HepG2 (cell line): ENCODE measurements at regions of chr1 and their contacts with region 1.

Region 1: GRCh38 chr1:235513495-235514366 is 9.5 kb upstream of the B3GALNT2 start:
- DNase-seq: peak; percentile 69
- ATAC-seq: peak; percentile 72; the same call in 2 of the 3 replicates
- H3K4me3 ChIP-seq: no peak overlapping the region
- H3K27ac ChIP-seq: no peak overlapping the region
- H3K4me1 ChIP-seq: no peaks in the 10 kb centered on the region; the same call in 1 of the 2 replicates
- H3K27me3 ChIP-seq: no peaks in the 10 kb centered on the region
- CTCF ChIP-seq: peak; percentile 80
- EP300 ChIP-seq: no peak
- POLR2A ChIP-seq: no peak
- RAD21 ChIP-seq: peak; percentile 46

Region 2: DNA sequence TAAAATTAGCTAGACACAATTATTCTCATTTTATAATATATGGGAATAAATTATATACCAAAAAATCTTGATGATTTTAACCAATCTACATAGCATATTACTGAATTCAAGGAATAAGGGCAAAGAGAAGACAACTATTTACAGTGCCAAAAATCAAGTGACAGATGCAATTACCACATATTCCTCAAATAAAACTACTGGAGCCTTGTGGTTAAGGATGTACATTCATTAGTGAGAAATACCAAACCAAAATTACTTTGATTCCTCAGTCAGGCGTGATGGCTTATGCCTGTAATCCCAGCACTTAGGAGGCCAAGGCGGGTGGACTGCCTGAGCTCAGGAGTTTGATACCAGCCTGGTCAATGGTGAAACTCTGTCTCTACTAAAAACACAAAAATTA is 283.9 kb before region 1 on chr1:
- CTCF ChIA-PET with region 1: no interaction called
- POLR2A ChIA-PET with region 1: no interaction called
- in situ Hi-C with region 1: no loop called
- intact Hi-C with region 1: no loop called
- DNase-seq: no peak
- ATAC-seq: no peak
- H3K4me3 ChIP-seq: no peak overlapping the region
- H3K27ac ChIP-seq: no peak overlapping the region
- H3K4me1 ChIP-seq: no peaks in the 10 kb centered on the region
- H3K27me3 ChIP-seq: no peaks in the 10 kb centered on the region; a peak in 1 of 5 replicates
- CTCF ChIP-seq: no peak
- EP300 ChIP-seq: no peak
- POLR2A ChIP-seq: no peak
- RAD21 ChIP-seq: no peak

Region 3: GRCh38 chr1:235532360-235532759 is 18.6 kb after region 1 on chr1:
- CTCF ChIA-PET with region 1: no interaction called
- POLR2A ChIA-PET with region 1: no interaction called
- in situ Hi-C with region 1: no loop called
- intact Hi-C with region 1: no loop called
- DNase-seq: no peak
- ATAC-seq: no peak
- H3K4me3 ChIP-seq: no peak overlapping the region
- H3K27ac ChIP-seq: no peak overlapping the region
- H3K4me1 ChIP-seq: no peaks in the 10 kb centered on the region
- H3K27me3 ChIP-seq: no peaks in the 10 kb centered on the region
- CTCF ChIP-seq: no peak
- EP300 ChIP-seq: no peak
- POLR2A ChIP-seq: no peak
- RAD21 ChIP-seq: no peak

Region 4: DNA sequence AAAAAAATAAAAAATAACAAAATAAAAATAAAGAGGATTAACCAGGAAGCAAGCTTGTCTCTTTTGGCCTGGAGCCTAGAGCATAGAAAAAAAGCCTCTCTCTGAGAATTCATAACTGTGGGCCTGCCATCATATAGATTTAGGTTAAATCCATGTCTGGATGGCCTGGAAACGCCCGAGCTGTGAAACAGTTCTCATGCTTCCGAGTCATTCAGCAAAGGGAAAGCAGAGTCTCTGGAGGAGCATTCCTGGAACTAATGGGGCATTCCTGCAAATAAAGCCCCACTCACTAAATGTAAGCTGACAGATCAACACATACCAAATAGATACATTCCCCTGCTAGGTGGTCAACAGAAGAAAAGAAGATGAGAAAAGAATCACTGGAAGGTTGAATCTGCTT is 211.7 kb after region 1 on chr1:
- CTCF ChIA-PET with region 1: interaction called, 19 read pairs
- POLR2A ChIA-PET with region 1: no interaction called
- in situ Hi-C with region 1: loop called (anchors 10 kb)
- intact Hi-C with region 1: loop called (anchors 2 kb)
- DNase-seq: no peak
- ATAC-seq: no peak
- H3K4me3 ChIP-seq: no peak overlapping the region
- H3K27ac ChIP-seq: no peak overlapping the region
- H3K4me1 ChIP-seq: no peaks in the 10 kb centered on the region
- H3K27me3 ChIP-seq: no peaks in the 10 kb centered on the region
- CTCF ChIP-seq: no peak
- EP300 ChIP-seq: no peak
- POLR2A ChIP-seq: no peak
- RAD21 ChIP-seq: no peak

Region 5: GRCh38 chr1:235739124-235739523 is 225.4 kb after region 1 on chr1:
- CTCF ChIA-PET with region 1: no interaction called
- POLR2A ChIA-PET with region 1: no interaction called
- in situ Hi-C with region 1: loop called (anchors 10 kb)
- intact Hi-C with region 1: no loop called
- DNase-seq: peak; percentile 25
- ATAC-seq: peak; percentile 31; the same call in 1 of the 3 replicates
- H3K4me3 ChIP-seq: no peak overlapping the region
- H3K27ac ChIP-seq: no peak overlapping the region
- H3K4me1 ChIP-seq: peaks cover 13% of the 10 kb centered on the region
- H3K27me3 ChIP-seq: no peaks in the 10 kb centered on the region
- CTCF ChIP-seq: no peak
- EP300 ChIP-seq: no peak
- POLR2A ChIP-seq: no peak
- RAD21 ChIP-seq: no peak

Region 6: GRCh38 chr1:235783148-235783776 is 269.5 kb after region 1 on chr1:
- CTCF ChIA-PET with region 1: interaction called, 12 read pairs
- POLR2A ChIA-PET with region 1: no interaction called
- in situ Hi-C with region 1: loop called (anchors 10 kb)
- intact Hi-C with region 1: loop called (anchors 1 kb)
- DNase-seq: peak; percentile 43
- ATAC-seq: no peak
- H3K4me3 ChIP-seq: no peak overlapping the region
- H3K27ac ChIP-seq: no peak overlapping the region
- H3K4me1 ChIP-seq: no peaks in the 10 kb centered on the region
- H3K27me3 ChIP-seq: no peaks in the 10 kb centered on the region
- CTCF ChIP-seq: peak; percentile 41
- EP300 ChIP-seq: no peak
- POLR2A ChIP-seq: no peak
- RAD21 ChIP-seq: no peak

Region 7: DNA sequence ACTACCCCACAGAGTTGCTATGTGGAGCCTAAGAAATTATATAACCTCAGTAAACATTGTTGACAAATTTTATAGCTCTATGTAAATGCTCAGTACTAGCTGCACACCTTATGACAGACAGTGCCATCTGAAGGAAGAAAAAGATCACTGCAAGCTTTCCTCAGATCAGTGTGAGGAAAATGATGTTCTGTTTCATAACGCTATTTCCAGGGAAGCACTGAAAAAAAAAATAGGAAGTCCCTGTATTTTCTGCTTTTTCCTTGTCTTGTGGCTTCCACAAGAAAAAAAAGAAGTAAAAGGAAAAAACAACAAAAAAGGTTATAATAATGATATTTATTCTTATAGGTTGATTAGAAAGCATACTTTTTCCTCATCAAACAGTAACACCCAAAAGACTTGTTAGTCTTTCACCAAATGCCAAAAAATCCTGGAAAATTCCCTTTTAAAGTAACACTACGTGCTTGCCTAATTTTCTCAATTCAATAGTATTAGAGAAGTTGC is 329.8 kb after region 1 on chr1:
- CTCF ChIA-PET with region 1: no interaction called
- POLR2A ChIA-PET with region 1: no interaction called
- in situ Hi-C with region 1: no loop called
- intact Hi-C with region 1: loop called (anchors 5 kb)
- DNase-seq: peak; percentile 44
- ATAC-seq: peak; percentile 90
- H3K4me3 ChIP-seq: no peak overlapping the region
- H3K27ac ChIP-seq: no peak overlapping the region
- H3K4me1 ChIP-seq: peaks cover 7% of the 10 kb centered on the region; the same call in 1 of the 2 replicates
- H3K27me3 ChIP-seq: no peaks in the 10 kb centered on the region
- CTCF ChIP-seq: peak; percentile 70
- EP300 ChIP-seq: no peak
- POLR2A ChIP-seq: no peak
- RAD21 ChIP-seq: peak; percentile 35; the same call in 1 of the 2 replicates